ENCODE measurements at regions of chr3 and their contacts with region 1.

Region 1: GRCh38 chr3:66816090-66816761 is 181.9 kb upstream of the KBTBD8 start:
- DNase-seq: no peak
- H3K4me3 ChIP-seq: no peak overlapping the region
- H3K27ac ChIP-seq: no peak overlapping the region
- H3K4me1 ChIP-seq: peaks cover 0 to 20% (median 14%) of the 10 kb centered on the region in 4 donors
- H3K27me3 ChIP-seq: no peaks in the 10 kb centered on the region
- CTCF ChIP-seq: peak; percentile 64 to 69 (median 65)
- EP300 ChIP-seq: no peak
- POLR2A ChIP-seq: no peak

Region 2: DNA sequence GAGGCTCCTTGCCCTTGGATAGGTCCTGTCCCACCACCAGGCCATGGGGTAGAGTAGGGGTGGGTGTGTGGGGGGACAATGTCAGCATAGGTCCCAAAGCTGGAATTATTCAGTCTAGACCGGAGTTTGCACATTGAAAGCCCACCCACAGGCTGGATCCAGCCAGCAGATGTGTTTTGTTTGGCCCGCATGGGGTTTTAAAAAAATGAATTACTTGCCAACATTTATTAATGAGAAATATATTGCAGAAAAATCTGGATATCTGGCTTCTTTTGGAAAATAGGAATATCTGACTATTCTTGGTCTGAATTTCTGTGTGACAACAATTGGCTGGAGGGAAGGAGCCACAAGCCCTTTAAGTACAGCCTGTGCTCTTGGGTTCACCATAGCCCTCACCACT is 298.1 kb before region 1 on chr3:
- intact Hi-C with region 1: loop called (anchors 5 kb)
- DNase-seq: no peak
- H3K4me3 ChIP-seq: no peak overlapping the region
- H3K27ac ChIP-seq: no peak overlapping the region
- H3K4me1 ChIP-seq: peaks cover 0 to 10% (median 0%) of the 10 kb centered on the region in 4 donors
- H3K27me3 ChIP-seq: no peaks in the 10 kb centered on the region
- CTCF ChIP-seq: no peak
- EP300 ChIP-seq: no peak
- POLR2A ChIP-seq: no peak

Measured in esophagus muscularis mucosa (tissue), 4 donors.